ENCODE measurements at regions of chr3 and their contacts with region 1.

Region 1: GRCh38 chr3:53709860-53710674 is 136.2 kb downstream of the CHDH start:
- DNase-seq: peak; percentile 64 to 90 (median 74)
- ATAC-seq: peak; percentile 80
- H3K4me3 ChIP-seq: no peak overlapping the region
- H3K27ac ChIP-seq: peak overlapping the region in 1 of 2 donors; percentile 37
- H3K4me1 ChIP-seq: peaks cover 15 to 47% of the 10 kb centered on the region in 2 donors
- H3K27me3 ChIP-seq: no peaks in the 10 kb centered on the region
- CTCF ChIP-seq: peak; percentile 63 to 73

Region 2: GRCh38 chr3:53375019-53375418 is 335.0 kb before region 1 on chr3:
- intact Hi-C with region 1: loop called in 1 of 2 experiments (anchors 10 kb)
- DNase-seq: peak; percentile 47 to 89 (median 80)
- ATAC-seq: peak; percentile 100
- H3K4me3 ChIP-seq: no peak overlapping the region
- H3K27ac ChIP-seq: no peak overlapping the region
- H3K4me1 ChIP-seq: no peaks in the 10 kb centered on the region
- H3K27me3 ChIP-seq: peaks cover 0 to 12% of the 10 kb centered on the region in 2 donors
- CTCF ChIP-seq: peak; percentile 72 to 75

Measured in left lung (tissue), 14 donors.